Psoas muscle (tissue), 8 donors: ENCODE measurements at regions of chr9 and their contacts with region 1.

Region 1: DNA sequence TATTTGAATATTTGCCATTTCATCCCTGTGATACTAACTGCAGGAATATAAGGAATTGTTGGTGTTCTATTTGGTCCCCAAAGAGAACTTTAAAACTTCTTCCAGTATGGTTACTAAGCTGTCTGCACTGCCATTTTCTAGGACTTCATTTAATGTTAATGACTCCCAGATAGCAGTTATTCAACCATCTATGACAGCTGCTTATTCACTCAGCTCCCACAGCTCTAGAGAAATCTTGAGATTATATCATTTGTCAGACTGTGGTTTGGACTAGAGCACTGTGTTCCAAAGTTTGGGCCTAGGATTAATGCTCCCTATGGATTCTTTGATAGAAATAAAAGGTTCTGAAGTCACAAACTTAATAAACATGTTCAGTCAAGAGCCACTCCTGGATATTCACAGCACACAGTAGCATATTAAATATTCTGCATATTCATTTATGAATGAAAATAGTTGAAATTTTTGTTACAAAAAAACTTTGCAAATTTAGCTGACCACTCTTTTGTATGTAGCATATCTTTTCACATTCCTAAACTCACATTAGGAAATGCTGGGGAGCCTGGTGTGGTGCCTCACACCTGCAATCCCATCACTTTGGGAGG is 173.7 kb downstream of the NFIB start:
- DNase-seq: no peak
- ATAC-seq: no peak
- H3K4me3 ChIP-seq: no peak overlapping the region
- H3K27ac ChIP-seq: no peak overlapping the region
- H3K4me1 ChIP-seq: peaks cover 5% of the 10 kb centered on the region
- H3K27me3 ChIP-seq: no peaks in the 10 kb centered on the region
- CTCF ChIP-seq: no peak

Region 2: GRCh38 chr9:14096258-14096922 is 43.8 kb before region 1 on chr9:
- intact Hi-C with region 1: loop called in 1 of 2 experiments (anchors 1 kb)
- DNase-seq: no peak
- ATAC-seq: peak; percentile 46 to 70 (median 60)
- H3K4me3 ChIP-seq: peak overlapping the region; percentile 5
- H3K27ac ChIP-seq: peak overlapping the region; percentile 52
- H3K4me1 ChIP-seq: peaks cover 16% of the 10 kb centered on the region
- H3K27me3 ChIP-seq: no peaks in the 10 kb centered on the region
- CTCF ChIP-seq: no peak

Region 3: GRCh38 chr9:14198841-14199455 is 58.8 kb after region 1 on chr9:
- intact Hi-C with region 1: loop called in 1 of 2 experiments (anchors 10 kb)
- DNase-seq: peak; percentile 74 to 86
- ATAC-seq: peak; percentile 79 to 94 (median 90)
- H3K4me3 ChIP-seq: peak overlapping the region; percentile 30
- H3K27ac ChIP-seq: peak overlapping the region; percentile 74
- H3K4me1 ChIP-seq: peaks cover 57% of the 10 kb centered on the region
- H3K27me3 ChIP-seq: no peaks in the 10 kb centered on the region
- CTCF ChIP-seq: no peak

Region 4: DNA sequence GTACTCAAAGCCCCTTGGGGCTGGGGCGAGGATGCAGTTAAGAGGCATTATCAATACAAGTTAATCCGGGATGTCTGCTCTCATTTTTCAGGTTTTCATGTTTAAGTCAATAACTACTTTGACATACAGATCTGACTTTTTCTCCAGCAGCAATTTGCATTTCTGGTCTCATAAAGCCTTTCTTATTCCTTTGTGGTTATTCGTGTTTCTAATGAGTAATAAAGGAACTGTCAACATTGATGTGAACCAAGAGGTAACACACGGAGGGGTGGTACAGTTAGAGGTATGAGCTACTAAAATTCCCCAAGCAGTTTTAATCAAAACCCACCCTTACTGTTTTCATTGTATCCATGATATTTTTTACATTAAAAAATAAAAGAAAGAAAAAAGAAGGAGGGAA is 311.8 kb after region 1 on chr9:
- intact Hi-C with region 1: no loop called
- DNase-seq: no peak
- ATAC-seq: no peak
- H3K4me3 ChIP-seq: no peak overlapping the region
- H3K27ac ChIP-seq: no peak overlapping the region
- H3K4me1 ChIP-seq: no peaks in the 10 kb centered on the region
- H3K27me3 ChIP-seq: no peaks in the 10 kb centered on the region
- CTCF ChIP-seq: no peak